ENCODE measurements at regions of chrX and their contacts with region 1.

Region 1: DNA sequence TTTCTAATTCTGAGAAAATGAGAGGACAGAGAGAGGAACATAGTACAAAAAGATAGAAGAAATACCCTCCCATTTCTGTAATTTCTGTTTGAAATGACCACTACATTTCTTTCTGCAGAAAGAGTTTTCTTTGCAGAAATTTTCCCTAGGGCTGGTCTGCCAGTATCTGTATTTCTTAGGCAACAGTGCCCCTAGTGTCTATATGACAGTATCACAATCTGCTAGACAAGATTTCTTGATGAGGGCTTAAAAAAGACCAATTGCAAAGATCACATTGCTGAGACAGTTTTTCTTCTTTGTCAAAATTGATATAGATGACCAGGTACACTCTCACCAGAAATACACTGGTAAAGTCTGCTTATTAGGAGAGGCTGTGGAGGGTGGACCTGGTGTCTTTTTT is 81.0 kb upstream of the ZDHHC15 start:
- DNase-seq: peak in 1 of 2 donors; percentile 4
- ATAC-seq: no peak
- H3K4me3 ChIP-seq: no peak overlapping the region
- H3K27ac ChIP-seq: no peak overlapping the region
- H3K4me1 ChIP-seq: peaks cover 0 to 5% (median 0%) of the 10 kb centered on the region in 9 donors
- H3K27me3 ChIP-seq: peaks cover 0 to 24% (median 0%) of the 10 kb centered on the region in 7 donors
- CTCF ChIP-seq: peak; percentile 44 to 77 (median 62)

Region 2: GRCh38 chrX:75038925-75039324 is 564.9 kb before region 1 on chrX:
- intact Hi-C with region 1: loop called in 1 of 10 experiments (anchors 5 kb)
- DNase-seq: no peak
- ATAC-seq: no peak
- H3K4me3 ChIP-seq: no peak overlapping the region
- H3K27ac ChIP-seq: no peak overlapping the region
- H3K4me1 ChIP-seq: no peaks in the 10 kb centered on the region
- H3K27me3 ChIP-seq: peaks cover 0 to 4% (median 0%) of the 10 kb centered on the region in 7 donors
- CTCF ChIP-seq: peak in 7 of 9 donors; percentile 16 to 42 (median 32)

Measured in heart right ventricle (tissue), 16 donors.